ENCODE measurements at regions of chr6 and their contacts with region 1.

Region 1: DNA sequence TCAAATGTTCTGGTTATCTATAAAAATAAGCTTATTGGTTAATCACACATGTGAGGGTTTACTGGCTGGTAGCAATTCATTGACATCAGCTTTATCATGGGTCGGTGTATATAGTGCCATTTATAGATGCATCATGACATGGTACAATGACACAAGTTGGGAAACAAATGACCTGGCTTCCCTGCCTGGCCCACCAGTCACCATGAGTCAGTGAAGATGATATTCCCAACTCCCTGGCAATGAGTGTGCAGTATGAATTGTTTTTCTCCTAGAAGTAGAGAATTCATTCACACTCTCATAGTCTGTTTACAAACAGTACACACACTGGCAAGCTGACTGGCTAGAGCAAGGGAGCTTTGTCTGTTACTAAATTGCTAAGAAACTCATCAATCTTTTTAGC is 37.2 kb upstream of the CALHM6 start:
- DNase-seq: no peak
- ATAC-seq: no peak
- H3K4me3 Mint-ChIP-seq: no peak overlapping the region
- H3K27ac Mint-ChIP-seq: no peak overlapping the region
- H3K4me1 Mint-ChIP-seq: peaks cover 1% of the 10 kb centered on the region
- H3K27me3 Mint-ChIP-seq: no peaks in the 10 kb centered on the region
- CTCF ChIP-seq: no peak

Region 2: DNA sequence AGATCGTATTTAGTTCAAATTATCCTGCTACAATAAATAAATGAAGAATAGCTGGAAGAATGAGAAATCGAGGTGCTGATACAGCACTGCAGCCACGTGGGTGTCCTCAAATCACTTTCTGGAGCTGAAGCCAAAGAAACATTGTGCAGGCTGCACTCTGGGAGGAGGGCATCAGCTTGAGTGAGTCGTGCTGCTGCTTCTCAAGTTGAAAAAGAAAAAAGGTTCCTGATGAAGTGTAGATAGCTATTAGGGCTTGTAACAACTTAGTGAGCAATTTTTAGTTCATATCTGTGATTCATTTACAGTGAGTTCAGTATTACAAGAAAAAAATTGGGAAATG is 12.7 kb before region 1 on chr6:
- CTCF ChIA-PET with region 1: no interaction called
- POLR2A ChIA-PET with region 1: interaction called, 3 read pairs
- intact Hi-C with region 1: loop called (anchors 1 kb)
- DNase-seq: no peak
- ATAC-seq: no peak
- H3K4me3 Mint-ChIP-seq: peak overlapping the region; percentile 40
- H3K27ac Mint-ChIP-seq: peak overlapping the region; percentile 88
- H3K4me1 Mint-ChIP-seq: peaks cover 61% of the 10 kb centered on the region
- H3K27me3 Mint-ChIP-seq: no peaks in the 10 kb centered on the region
- CTCF ChIP-seq: no peak

Region 3: GRCh38 chr6:116444092-116444491 is 20.1 kb after region 1 on chr6:
- CTCF ChIA-PET with region 1: interaction called, 4 read pairs
- POLR2A ChIA-PET with region 1: no interaction called
- intact Hi-C with region 1: loop called (anchors 2 kb)
- DNase-seq: no peak
- ATAC-seq: peak; percentile 78
- H3K4me3 Mint-ChIP-seq: no peak overlapping the region
- H3K27ac Mint-ChIP-seq: no peak overlapping the region
- H3K4me1 Mint-ChIP-seq: peaks cover 26% of the 10 kb centered on the region
- H3K27me3 Mint-ChIP-seq: no peaks in the 10 kb centered on the region
- CTCF ChIP-seq: no peak

Region 4: DNA sequence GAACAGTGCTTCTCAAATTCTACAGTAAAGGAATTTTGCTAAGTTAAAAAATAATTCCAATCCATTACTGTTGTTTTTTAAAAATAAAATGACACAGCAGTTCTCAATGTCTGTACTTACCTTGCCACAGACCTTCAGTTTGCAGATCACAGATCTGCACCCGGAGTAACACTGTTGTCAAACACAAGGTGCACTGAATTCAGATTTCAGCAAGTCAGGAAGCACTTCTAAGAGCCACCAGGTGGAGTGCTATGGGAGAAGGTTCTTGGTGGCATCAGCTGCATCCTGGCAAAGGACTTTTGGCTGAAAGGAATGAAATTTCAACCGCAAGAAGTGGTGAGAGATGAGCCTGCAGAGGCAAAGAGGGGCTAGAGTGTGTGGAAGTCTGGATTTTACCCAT is 209.7 kb after region 1 on chr6:
- CTCF ChIA-PET with region 1: no interaction called
- POLR2A ChIA-PET with region 1: no interaction called
- intact Hi-C with region 1: no loop called
- DNase-seq: no peak
- ATAC-seq: no peak
- H3K4me3 Mint-ChIP-seq: no peak overlapping the region
- H3K27ac Mint-ChIP-seq: no peak overlapping the region
- H3K4me1 Mint-ChIP-seq: peaks cover 25% of the 10 kb centered on the region
- H3K27me3 Mint-ChIP-seq: no peaks in the 10 kb centered on the region
- CTCF ChIP-seq: no peak